ENCODE measurements at regions of chr4 and their contacts with region 1.

Region 1: DNA sequence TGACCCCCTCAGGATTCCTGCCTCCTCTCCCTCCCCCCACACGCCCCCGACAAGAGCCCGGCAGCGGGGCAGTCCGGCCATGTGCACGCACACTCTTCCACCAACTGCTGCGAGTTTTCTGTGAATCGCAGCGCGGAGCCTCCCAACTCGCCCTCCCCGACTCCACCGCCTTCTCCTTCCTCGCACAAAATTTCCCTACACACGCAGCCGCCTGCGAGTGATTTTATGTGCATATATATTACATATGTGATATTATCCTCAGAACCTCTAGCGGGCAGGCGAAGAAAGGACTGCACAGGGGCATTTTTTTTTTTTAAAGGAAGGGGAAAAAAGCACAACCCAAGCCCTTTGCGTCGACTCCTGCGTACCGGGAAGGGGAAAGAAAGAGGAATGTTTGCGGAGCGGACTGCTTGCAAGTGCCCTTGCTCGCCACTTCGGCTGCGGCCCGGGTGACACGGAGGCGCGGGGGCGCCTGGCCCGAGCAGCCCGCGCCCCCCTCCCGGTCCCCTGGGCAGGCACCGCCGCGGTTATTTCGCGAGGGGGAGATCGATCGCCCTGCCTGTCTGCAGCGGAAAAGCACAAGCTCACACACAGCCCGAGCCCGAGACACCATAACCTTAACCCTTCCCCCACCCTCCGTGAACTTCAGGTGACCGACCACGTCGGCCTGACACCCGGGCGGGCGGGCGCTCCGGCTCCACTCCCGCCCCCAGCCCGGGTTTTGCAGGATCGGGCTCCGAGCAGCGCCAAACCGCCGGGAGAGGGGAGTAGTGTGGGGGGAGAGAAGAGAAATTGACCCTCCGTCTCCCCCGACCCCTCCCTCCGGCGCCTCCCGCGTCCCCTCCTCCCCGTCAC is 2.3 kb downstream of the ZNF827 start:
- DNase-seq: peak; percentile 67
- H3K4me3 ChIP-seq: peak overlapping the region; percentile 84 to 91 (median 85)
- H3K27ac ChIP-seq: peak overlapping the region; percentile 74
- H3K4me1 ChIP-seq: peaks cover 20% of the 10 kb centered on the region
- H3K27me3 ChIP-seq: no peaks in the 10 kb centered on the region
- CTCF ChIP-seq: peak in 1 of 2 donors; percentile 40

Region 2: GRCh38 chr4:145732895-145733880 is 203.2 kb before region 1 on chr4:
- CTCF ChIA-PET with region 1: no interaction called
- dilution Hi-C with region 1: no loop called
- in situ Hi-C with region 1: no loop called
- intact Hi-C with region 1: loop called (anchors 1 kb)
- DNase-seq: peak; percentile 95
- H3K4me3 ChIP-seq: peak overlapping the region; percentile 36 to 61 (median 50)
- H3K27ac ChIP-seq: peak overlapping the region; percentile 99
- H3K4me1 ChIP-seq: peaks cover 35% of the 10 kb centered on the region
- H3K27me3 ChIP-seq: no peaks in the 10 kb centered on the region
- CTCF ChIP-seq: no peak

Region 3: DNA sequence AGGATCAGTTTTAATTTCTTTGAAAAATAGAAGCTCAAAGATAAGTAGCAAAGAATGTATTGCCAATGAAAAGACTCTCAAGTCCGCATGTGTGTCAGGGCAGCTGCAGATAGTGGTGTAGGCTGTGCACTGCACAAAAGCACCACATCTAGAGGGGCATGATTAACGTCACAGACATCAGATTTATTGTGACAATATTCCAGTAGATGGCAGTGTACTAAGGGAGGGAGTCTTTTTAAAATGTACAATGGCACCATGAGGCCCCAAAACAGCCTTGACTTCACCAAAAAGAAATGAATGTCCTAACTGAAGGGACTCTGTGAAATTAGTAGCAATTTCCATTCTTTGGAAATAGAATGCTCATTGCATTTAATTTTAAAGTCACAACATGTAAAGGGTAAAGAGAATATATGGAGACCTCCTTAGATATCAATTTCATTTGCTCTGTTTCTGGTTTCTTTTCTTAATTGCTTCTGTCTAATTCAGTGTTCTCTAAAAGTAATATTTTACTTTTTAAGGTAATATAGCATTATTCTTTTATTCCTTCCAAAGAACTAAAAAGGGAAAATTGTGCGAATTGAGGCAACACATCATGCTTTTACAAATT is 96.1 kb before region 1 on chr4:
- CTCF ChIA-PET with region 1: no interaction called
- dilution Hi-C with region 1: no loop called
- in situ Hi-C with region 1: no loop called
- intact Hi-C with region 1: loop called (anchors 5 kb)
- DNase-seq: peak; percentile 33
- H3K4me3 ChIP-seq: no peak overlapping the region
- H3K27ac ChIP-seq: no peak overlapping the region
- H3K4me1 ChIP-seq: peaks cover 18% of the 10 kb centered on the region
- H3K27me3 ChIP-seq: no peaks in the 10 kb centered on the region
- CTCF ChIP-seq: peak; percentile 50 to 55

Region 4: GRCh38 chr4:145920205-145920604 is 16.2 kb before region 1 on chr4:
- CTCF ChIA-PET with region 1: no interaction called
- dilution Hi-C with region 1: no loop called
- in situ Hi-C with region 1: no loop called
- intact Hi-C with region 1: loop called (anchors 1 kb)
- DNase-seq: peak; percentile 93
- H3K4me3 ChIP-seq: peak overlapping the region in 1 of 3 experiments; percentile 6
- H3K27ac ChIP-seq: peak overlapping the region; percentile 90
- H3K4me1 ChIP-seq: peaks cover 18% of the 10 kb centered on the region
- H3K27me3 ChIP-seq: no peaks in the 10 kb centered on the region
- CTCF ChIP-seq: no peak

Region 5: GRCh38 chr4:146175541-146176453 is 239.4 kb after region 1 on chr4 and contains the start of gene LSM6:
- CTCF ChIA-PET with region 1: no interaction called
- dilution Hi-C with region 1: no loop called
- in situ Hi-C with region 1: no loop called
- intact Hi-C with region 1: loop called (anchors 1 kb)
- DNase-seq: peak; percentile 83
- H3K4me3 ChIP-seq: peak within 1 kb of the TSS; percentile 75 to 89 (median 79)
- H3K27ac ChIP-seq: peak within 1 kb of the TSS; percentile 81
- H3K4me1 ChIP-seq: no peaks in the 10 kb centered on the region
- H3K27me3 ChIP-seq: no peaks in the 10 kb centered on the region
- CTCF ChIP-seq: no peak
- total RNA-seq, gene LSM6: 10.5 to 32.1 TPM

Measured in mammary epithelial cell (primary cell).